ENCODE measurements at regions of chr22 and their contacts with region 1.

Region 1: GRCh38 chr22:36856121-36856791 is 4.5 kb upstream of the NCF4 start:
- DNase-seq: no peak
- ATAC-seq: peak; percentile 55
- H3K4me3 ChIP-seq: no peak overlapping the region
- H3K27ac ChIP-seq: no peak overlapping the region
- H3K4me1 ChIP-seq: peaks cover 41% of the 10 kb centered on the region
- H3K27me3 ChIP-seq: no peaks in the 10 kb centered on the region
- CTCF ChIP-seq: peak; percentile 100; a peak in 5 of 6 replicates
- EP300 ChIP-seq: no peak
- POLR2A ChIP-seq: no peak
- RAD21 ChIP-seq: peak; percentile 90

Region 2: GRCh38 chr22:36528795-36529751 is 327.2 kb before region 1 on chr22 and contains the start of gene EIF3D:
- CTCF ChIA-PET with region 1: no interaction called
- POLR2A ChIA-PET with region 1: interaction called, 4 read pairs
- RAD21 ChIA-PET with region 1: no interaction called
- SMC1A ChIA-PET with region 1: no interaction called
- in situ Hi-C with region 1: no loop called
- intact Hi-C with region 1: loop called (anchors 5 kb)
- DNase-seq: peak; percentile 99
- ATAC-seq: peak; percentile 96
- H3K4me3 ChIP-seq: peak within 1 kb of the TSS; percentile 84
- H3K27ac ChIP-seq: peak within 1 kb of the TSS; percentile 95
- H3K4me1 ChIP-seq: no peaks in the 10 kb centered on the region; the same call in 1 of the 2 replicates
- H3K27me3 ChIP-seq: no peaks in the 10 kb centered on the region
- CTCF ChIP-seq: no peak
- EP300 ChIP-seq: 0 out of 4 replicates have a peak, but pooled peaks of 1 of the 2 experiments have one; percentile 21
- POLR2A ChIP-seq: peak; percentile 97
- RAD21 ChIP-seq: no peak
- polyA plus RNA-seq, gene EIF3D: 249 to 445 TPM

Region 3: GRCh38 chr22:36689583-36689982 is 166.7 kb before region 1 on chr22:
- CTCF ChIA-PET with region 1: no interaction called
- POLR2A ChIA-PET with region 1: no interaction called
- RAD21 ChIA-PET with region 1: no interaction called
- SMC1A ChIA-PET with region 1: no interaction called
- in situ Hi-C with region 1: no loop called
- intact Hi-C with region 1: no loop called
- DNase-seq: no peak
- ATAC-seq: no peak
- H3K4me3 ChIP-seq: no peak overlapping the region
- H3K27ac ChIP-seq: no peak overlapping the region
- H3K4me1 ChIP-seq: no peaks in the 10 kb centered on the region
- H3K27me3 ChIP-seq: peaks cover 2 to 7% of the 10 kb centered on the region in 2 experiments; a peak in 2 of 4 replicates
- CTCF ChIP-seq: no peak
- EP300 ChIP-seq: no peak
- POLR2A ChIP-seq: no peak
- RAD21 ChIP-seq: no peak

Region 4: GRCh38 chr22:36734171-36735058 is 121.8 kb before region 1 on chr22:
- CTCF ChIA-PET with region 1: no interaction called
- POLR2A ChIA-PET with region 1: no interaction called
- RAD21 ChIA-PET with region 1: no interaction called
- SMC1A ChIA-PET with region 1: no interaction called
- in situ Hi-C with region 1: no loop called
- intact Hi-C with region 1: no loop called
- DNase-seq: no peak
- ATAC-seq: no peak
- H3K4me3 ChIP-seq: no peak overlapping the region
- H3K27ac ChIP-seq: no peak overlapping the region
- H3K4me1 ChIP-seq: no peaks in the 10 kb centered on the region
- H3K27me3 ChIP-seq: no peaks in the 10 kb centered on the region; a peak in 1 of 4 replicates
- CTCF ChIP-seq: no peak
- EP300 ChIP-seq: no peak
- POLR2A ChIP-seq: no peak
- RAD21 ChIP-seq: no peak

Region 5: GRCh38 chr22:36781656-36782627 is 74.3 kb before region 1 on chr22:
- CTCF ChIA-PET with region 1: interaction called, 109 read pairs
- POLR2A ChIA-PET with region 1: interaction called, 3 read pairs
- RAD21 ChIA-PET with region 1: interaction called, 16 read pairs
- SMC1A ChIA-PET with region 1: interaction called, 11 read pairs
- in situ Hi-C with region 1: no loop called
- intact Hi-C with region 1: loop called (anchors 1 kb)
- DNase-seq: peak; percentile 33
- ATAC-seq: peak; percentile 98
- H3K4me3 ChIP-seq: no peak overlapping the region
- H3K27ac ChIP-seq: no peak overlapping the region
- H3K4me1 ChIP-seq: peaks cover under 1% of the 10 kb centered on the region; the same call in 1 of the 2 replicates
- H3K27me3 ChIP-seq: peaks cover 0 to 5% of the 10 kb centered on the region in 2 experiments; a peak in 1 of 4 replicates
- CTCF ChIP-seq: peak; percentile 90 to 97 (median 95)
- EP300 ChIP-seq: no peak; a peak in 1 of 4 replicates
- POLR2A ChIP-seq: no peak
- RAD21 ChIP-seq: peak; percentile 84

Region 6: GRCh38 chr22:36811094-36811800 is 45.0 kb before region 1 on chr22:
- CTCF ChIA-PET with region 1: no interaction called
- POLR2A ChIA-PET with region 1: no interaction called
- RAD21 ChIA-PET with region 1: no interaction called
- SMC1A ChIA-PET with region 1: no interaction called
- in situ Hi-C with region 1: no loop called
- intact Hi-C with region 1: no loop called
- DNase-seq: no peak
- ATAC-seq: no peak
- H3K4me3 ChIP-seq: no peak overlapping the region
- H3K27ac ChIP-seq: no peak overlapping the region
- H3K4me1 ChIP-seq: no peaks in the 10 kb centered on the region
- H3K27me3 ChIP-seq: peaks cover 6 to 11% of the 10 kb centered on the region in 2 experiments
- CTCF ChIP-seq: no peak
- EP300 ChIP-seq: no peak
- POLR2A ChIP-seq: no peak
- RAD21 ChIP-seq: no peak

Region 7: GRCh38 chr22:36891646-36892045 is 35.4 kb after region 1 on chr22:
- CTCF ChIA-PET with region 1: interaction called, 21 read pairs
- POLR2A ChIA-PET with region 1: no interaction called
- RAD21 ChIA-PET with region 1: interaction called, 3 read pairs
- SMC1A ChIA-PET with region 1: interaction called, 7 read pairs
- in situ Hi-C with region 1: no loop called
- intact Hi-C with region 1: no loop called
- DNase-seq: no peak
- ATAC-seq: no peak
- H3K4me3 ChIP-seq: no peak overlapping the region
- H3K27ac ChIP-seq: no peak overlapping the region
- H3K4me1 ChIP-seq: no peaks in the 10 kb centered on the region
- H3K27me3 ChIP-seq: no peaks in the 10 kb centered on the region
- CTCF ChIP-seq: no peak
- EP300 ChIP-seq: no peak
- POLR2A ChIP-seq: no peak
- RAD21 ChIP-seq: no peak

Region 8: GRCh38 chr22:36913427-36914389 is 57.5 kb after region 1 on chr22 and contains the start of gene CSF2RB:
- CTCF ChIA-PET with region 1: interaction called, 73 read pairs
- POLR2A ChIA-PET with region 1: interaction called, 33 read pairs
- RAD21 ChIA-PET with region 1: interaction called, 27 read pairs
- SMC1A ChIA-PET with region 1: interaction called, 42 read pairs
- in situ Hi-C with region 1: no loop called
- intact Hi-C with region 1: no loop called
- DNase-seq: no peak
- ATAC-seq: peak; percentile 78
- H3K4me3 ChIP-seq: peak within 1 kb of the TSS; percentile 67
- H3K27ac ChIP-seq: peak within 1 kb of the TSS; percentile 68
- H3K4me1 ChIP-seq: peaks cover 23% of the 10 kb centered on the region; the same call in 1 of the 2 replicates
- H3K27me3 ChIP-seq: no peaks in the 10 kb centered on the region
- CTCF ChIP-seq: no peak
- EP300 ChIP-seq: no peak
- POLR2A ChIP-seq: peak; percentile 6; the same call in 1 of the 2 replicates
- RAD21 ChIP-seq: no peak
- polyA plus RNA-seq, gene CSF2RB: 0.82 to 1.5 TPM

Region 9: GRCh38 chr22:36946421-36947158 is 90.3 kb after region 1 on chr22:
- CTCF ChIA-PET with region 1: interaction called, 18 read pairs
- POLR2A ChIA-PET with region 1: interaction called, 13 read pairs
- RAD21 ChIA-PET with region 1: interaction called, 8 read pairs
- SMC1A ChIA-PET with region 1: interaction called, 13 read pairs
- in situ Hi-C with region 1: no loop called
- intact Hi-C with region 1: no loop called
- DNase-seq: no peak
- ATAC-seq: peak; percentile 68
- H3K4me3 ChIP-seq: no peak overlapping the region
- H3K27ac ChIP-seq: no peak overlapping the region
- H3K4me1 ChIP-seq: peaks cover 16% of the 10 kb centered on the region
- H3K27me3 ChIP-seq: no peaks in the 10 kb centered on the region
- CTCF ChIP-seq: peak in 2 of 3 experiments; percentile 21 to 39; a peak in 5 of 6 replicates
- EP300 ChIP-seq: no peak
- POLR2A ChIP-seq: no peak
- RAD21 ChIP-seq: peak; percentile 51

Region 10: GRCh38 chr22:37043828-37044538 is 187.7 kb after region 1 on chr22:
- CTCF ChIA-PET with region 1: interaction called, 6 read pairs
- POLR2A ChIA-PET with region 1: interaction called, 9 read pairs
- RAD21 ChIA-PET with region 1: interaction called, 9 read pairs
- SMC1A ChIA-PET with region 1: interaction called, 3 read pairs
- in situ Hi-C with region 1: no loop called
- intact Hi-C with region 1: loop called (anchors 10 kb)
- DNase-seq: no peak
- ATAC-seq: peak; percentile 99
- H3K4me3 ChIP-seq: no peak overlapping the region
- H3K27ac ChIP-seq: no peak overlapping the region
- H3K4me1 ChIP-seq: peaks cover 10% of the 10 kb centered on the region
- H3K27me3 ChIP-seq: peaks cover 0 to 2% of the 10 kb centered on the region in 2 experiments; a peak in 1 of 4 replicates
- CTCF ChIP-seq: peak; percentile 81 to 92 (median 85)
- EP300 ChIP-seq: no peak
- POLR2A ChIP-seq: no peak
- RAD21 ChIP-seq: peak; percentile 58